T-cell (primary cell): ENCODE measurements at regions of chr7 and their contacts with region 1.

Region 1: GRCh38 chr7:105067691-105068090 is 53.7 kb downstream of the KMT2E start:
- DNase-seq: no peak
- ATAC-seq: no peak
- H3K4me3 ChIP-seq: no peak overlapping the region
- H3K4me3 Mint-ChIP-seq: no peak overlapping the region
- H3K27ac ChIP-seq: no peak overlapping the region
- H3K27ac Mint-ChIP-seq: no peak overlapping the region
- H3K4me1 ChIP-seq: no peaks in the 10 kb centered on the region
- H3K4me1 Mint-ChIP-seq: peaks cover 34 to 44% (median 38%) of the 10 kb centered on the region in 3 donors
- H3K27me3 ChIP-seq: no peaks in the 10 kb centered on the region
- H3K27me3 Mint-ChIP-seq: no peaks in the 10 kb centered on the region

Region 2: DNA sequence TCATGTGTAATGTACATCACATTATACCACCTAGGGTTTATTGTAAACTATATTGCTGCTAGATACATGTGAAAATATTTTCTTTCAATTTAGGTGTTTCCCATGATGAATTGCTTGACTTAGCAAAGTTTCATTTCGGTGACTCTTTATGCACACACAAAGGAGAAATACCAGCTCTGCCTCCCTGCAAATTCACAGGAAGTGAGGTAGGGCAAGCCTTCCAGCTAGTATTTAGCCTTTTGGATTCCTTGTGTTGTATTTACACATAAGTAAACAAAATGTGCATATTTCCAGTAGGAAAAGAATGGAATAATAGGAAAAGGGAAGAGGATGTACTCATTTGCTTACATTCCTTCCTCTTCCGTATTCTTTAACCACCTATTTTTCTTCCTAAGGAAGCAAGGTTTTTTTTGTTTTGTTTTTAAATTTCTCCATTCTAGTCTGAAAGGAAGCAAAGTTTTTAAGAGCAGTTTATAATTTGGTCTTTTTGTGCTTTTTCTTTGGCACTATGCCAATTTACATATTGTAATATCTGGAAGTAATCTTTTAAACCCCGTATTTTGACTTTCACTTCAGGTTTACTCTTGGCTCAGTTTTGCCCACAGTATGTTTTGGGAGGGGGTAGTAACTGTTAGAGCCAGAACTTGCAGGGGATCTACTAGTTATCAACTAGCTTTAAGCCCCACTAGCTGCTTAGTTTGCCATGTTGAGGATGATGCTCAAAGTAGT is 1760.0 kb before region 1 on chr7:
- CTCF ChIA-PET with region 1: interaction called in 1 of 2 experiments, 13 read pairs
- POLR2A ChIA-PET with region 1: no interaction called
- DNase-seq: no peak
- ATAC-seq: no peak
- H3K4me3 ChIP-seq: no peak overlapping the region
- H3K4me3 Mint-ChIP-seq: no peak overlapping the region
- H3K27ac ChIP-seq: no peak overlapping the region
- H3K27ac Mint-ChIP-seq: peak overlapping the region in 1 of 2 donors; percentile 11
- H3K4me1 ChIP-seq: no peaks in the 10 kb centered on the region
- H3K4me1 Mint-ChIP-seq: peaks cover 7 to 12% (median 9%) of the 10 kb centered on the region in 3 donors
- H3K27me3 ChIP-seq: no peaks in the 10 kb centered on the region
- H3K27me3 Mint-ChIP-seq: no peaks in the 10 kb centered on the region

Region 3: GRCh38 chr7:105046414-105046813 is 21.3 kb before region 1 on chr7:
- CTCF ChIA-PET with region 1: interaction called in 1 of 2 experiments, 12 read pairs
- POLR2A ChIA-PET with region 1: interaction called, 4 to 8 read pairs
- DNase-seq: no peak
- ATAC-seq: no peak
- H3K4me3 ChIP-seq: no peak overlapping the region
- H3K4me3 Mint-ChIP-seq: no peak overlapping the region
- H3K27ac ChIP-seq: no peak overlapping the region
- H3K27ac Mint-ChIP-seq: peak overlapping the region; percentile 0 to 42
- H3K4me1 ChIP-seq: peaks cover 7 to 18% of the 10 kb centered on the region in 2 experiments
- H3K4me1 Mint-ChIP-seq: peaks cover 55 to 68% (median 59%) of the 10 kb centered on the region in 3 donors
- H3K27me3 ChIP-seq: no peaks in the 10 kb centered on the region
- H3K27me3 Mint-ChIP-seq: no peaks in the 10 kb centered on the region